Keratinocyte (primary cell): ENCODE measurements at regions of chr12 and their contacts with region 1.

Region 1: GRCh38 chr12:130747867-130748740 is 32.0 kb upstream of the RIMBP2 start:
- DNase-seq: no peak
- H3K4me3 ChIP-seq: no peak overlapping the region
- H3K27ac ChIP-seq: no peak overlapping the region
- H3K4me1 ChIP-seq: peaks cover 2% of the 10 kb centered on the region
- H3K27me3 ChIP-seq: no peaks in the 10 kb centered on the region
- CTCF ChIP-seq: peak; percentile 81 to 94 (median 93)

Region 2: GRCh38 chr12:130375296-130376287 is 372.5 kb before region 1 on chr12:
- dilution Hi-C with region 1: loop called (anchors 25 kb)
- DNase-seq: no peak
- H3K4me3 ChIP-seq: no peak overlapping the region
- H3K27ac ChIP-seq: no peak overlapping the region
- H3K4me1 ChIP-seq: no peaks in the 10 kb centered on the region
- H3K27me3 ChIP-seq: peaks cover 7% of the 10 kb centered on the region
- CTCF ChIP-seq: no peak

Region 3: DNA sequence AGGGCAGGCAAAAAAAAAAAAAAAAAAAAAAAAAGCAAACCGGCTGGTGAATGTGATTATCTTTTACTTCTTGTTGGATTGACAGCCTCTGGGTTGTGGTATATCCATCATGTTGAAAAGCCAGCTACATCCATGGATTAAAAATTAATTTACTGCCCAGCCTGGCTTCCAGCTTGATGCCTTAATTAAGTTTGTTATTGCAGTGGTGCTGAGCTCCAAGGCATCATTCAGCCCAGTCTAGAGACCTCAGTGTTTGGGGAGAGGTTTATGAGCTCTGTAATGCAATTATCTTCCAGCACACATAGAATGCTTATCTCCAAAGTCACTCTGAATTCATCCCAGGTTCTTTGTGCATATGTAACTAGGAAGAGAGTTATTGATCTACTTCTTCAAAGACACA is 146.8 kb before region 1 on chr12:
- dilution Hi-C with region 1: no loop called
- DNase-seq: no peak
- H3K4me3 ChIP-seq: no peak overlapping the region
- H3K27ac ChIP-seq: no peak overlapping the region
- H3K4me1 ChIP-seq: no peaks in the 10 kb centered on the region
- H3K27me3 ChIP-seq: no peaks in the 10 kb centered on the region
- CTCF ChIP-seq: no peak